K562 (cell line): ENCODE measurements at regions of chr2 and their contacts with region 1.

Region 1: DNA sequence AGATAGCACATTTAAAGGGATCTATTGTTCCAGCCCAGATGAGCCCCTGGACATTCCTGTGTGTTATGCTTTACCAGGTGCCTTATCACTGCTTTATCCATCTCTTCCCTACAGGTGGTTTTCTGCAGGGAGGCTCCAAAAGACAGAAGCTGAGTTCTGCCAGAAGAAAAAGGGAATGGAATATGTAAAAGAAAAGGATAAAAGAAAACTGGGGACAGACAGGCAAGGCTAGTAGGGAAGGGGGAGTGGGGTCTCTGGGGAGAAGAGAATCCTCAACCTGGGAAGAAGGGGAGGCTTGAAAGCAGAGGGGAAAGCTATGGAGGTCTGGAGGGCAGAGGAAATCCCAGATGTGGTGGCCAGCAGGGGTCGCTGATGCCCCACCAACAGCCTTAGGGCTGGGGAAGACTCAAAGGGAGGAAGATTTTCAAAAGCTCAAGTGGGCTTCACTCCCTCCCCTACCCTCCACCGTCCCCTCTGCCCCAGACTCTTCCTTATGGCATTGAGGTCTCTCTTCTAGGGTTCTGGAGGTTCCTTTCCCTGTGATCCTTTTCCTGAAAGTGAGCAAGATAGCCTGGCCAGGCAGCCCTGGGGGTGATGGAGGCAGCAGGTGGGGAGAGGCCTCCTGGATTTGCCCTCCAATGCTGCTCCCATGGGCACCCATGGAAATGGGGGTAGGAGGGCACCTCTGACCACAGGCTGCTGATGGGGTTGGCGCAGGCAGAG is 178.1 kb upstream of the PKDCC start:
- DNase-seq: peak; percentile 74 to 77 (median 76)
- ATAC-seq: peak; percentile 97
- H3K4me3 ChIP-seq: no peak overlapping the region
- H3K27ac ChIP-seq: no peak overlapping the region
- H3K4me1 ChIP-seq: no peaks in the 10 kb centered on the region
- H3K27me3 ChIP-seq: peaks cover 0 to 19% of the 10 kb centered on the region in 2 experiments; a peak in 2 of 5 replicates
- CTCF ChIP-seq: peak; percentile 80 to 90 (median 80)
- EP300 ChIP-seq: no peak
- POLR2A ChIP-seq: no peak
- RAD21 ChIP-seq: peak; percentile 96 to 97

Region 2: DNA sequence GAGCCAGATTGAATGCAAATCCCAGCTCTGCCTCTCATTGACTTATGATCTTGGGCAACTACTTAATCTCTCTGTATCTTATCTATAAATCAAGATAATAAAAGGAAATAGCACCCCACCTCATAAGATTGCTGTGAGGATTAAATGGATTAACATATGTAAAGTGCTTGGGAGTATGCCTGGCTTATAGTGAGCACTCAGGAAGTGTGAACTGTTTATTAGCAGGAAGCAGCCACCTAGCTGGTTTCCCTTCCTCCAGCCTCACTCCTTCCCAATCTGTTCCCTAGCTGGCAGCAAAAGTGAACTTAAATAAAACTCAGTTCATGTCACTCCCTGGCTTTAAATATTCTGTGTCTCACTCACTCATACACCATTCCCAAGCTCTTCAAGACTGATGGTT is 348.5 kb before region 1 on chr2:
- CTCF ChIA-PET with region 1: no interaction called
- POLR2A ChIA-PET with region 1: no interaction called
- in situ Hi-C with region 1: no loop called
- intact Hi-C with region 1: no loop called
- DNase-seq: no peak
- ATAC-seq: no peak
- H3K4me3 ChIP-seq: no peak overlapping the region
- H3K27ac ChIP-seq: no peak overlapping the region
- H3K4me1 ChIP-seq: no peaks in the 10 kb centered on the region
- H3K27me3 ChIP-seq: no peaks in the 10 kb centered on the region
- CTCF ChIP-seq: no peak
- EP300 ChIP-seq: no peak
- POLR2A ChIP-seq: no peak
- RAD21 ChIP-seq: no peak

Region 3: DNA sequence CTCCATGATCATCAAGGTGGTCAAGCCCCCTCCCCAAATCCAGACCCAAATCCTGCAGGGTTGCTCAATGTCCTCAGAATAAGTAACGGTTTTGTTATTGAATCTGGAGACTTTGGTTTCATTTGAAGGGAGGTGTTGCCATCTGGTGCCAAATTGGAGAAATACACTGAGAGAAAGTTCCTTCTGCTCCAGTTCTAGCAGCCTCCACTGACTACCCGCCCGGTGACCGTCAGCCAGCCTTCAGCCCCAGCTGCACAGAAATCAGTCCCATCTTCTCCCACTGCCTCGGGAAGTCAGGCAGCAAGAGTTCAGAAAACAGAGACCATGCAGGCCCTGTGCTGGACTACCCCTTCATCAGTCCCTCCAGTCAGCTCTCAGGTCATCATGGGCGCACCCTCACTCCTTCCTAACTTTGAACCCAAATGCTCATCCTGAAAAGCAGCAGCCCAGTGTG is 216.8 kb after region 1 on chr2:
- CTCF ChIA-PET with region 1: interaction called, 33 read pairs
- POLR2A ChIA-PET with region 1: interaction called, 3 read pairs
- in situ Hi-C with region 1: loop called (anchors 5 kb)
- intact Hi-C with region 1: loop called (anchors 1 kb)
- DNase-seq: peak; percentile 44 to 59 (median 52)
- ATAC-seq: peak; percentile 70
- H3K4me3 ChIP-seq: no peak overlapping the region
- H3K27ac ChIP-seq: no peak overlapping the region
- H3K4me1 ChIP-seq: peaks cover 0 to 3% of the 10 kb centered on the region in 2 experiments; a peak in 1 of 5 replicates
- H3K27me3 ChIP-seq: peaks cover 2 to 9% of the 10 kb centered on the region in 2 experiments; a peak in 3 of 5 replicates
- CTCF ChIP-seq: peak; percentile 59 to 78 (median 71)
- EP300 ChIP-seq: no peak
- POLR2A ChIP-seq: no peak
- RAD21 ChIP-seq: peak; percentile 94 to 95

Region 4: GRCh38 chr2:42183775-42184174 is 314.1 kb after region 1 on chr2:
- CTCF ChIA-PET with region 1: no interaction called
- POLR2A ChIA-PET with region 1: no interaction called
- in situ Hi-C with region 1: no loop called
- intact Hi-C with region 1: no loop called
- DNase-seq: no peak
- ATAC-seq: no peak
- H3K4me3 ChIP-seq: no peak overlapping the region
- H3K27ac ChIP-seq: no peak overlapping the region
- H3K4me1 ChIP-seq: peaks cover 0 to 6% of the 10 kb centered on the region in 2 experiments; a peak in 1 of 5 replicates
- H3K27me3 ChIP-seq: no peaks in the 10 kb centered on the region
- CTCF ChIP-seq: no peak
- EP300 ChIP-seq: no peak
- POLR2A ChIP-seq: no peak
- RAD21 ChIP-seq: no peak

Region 5: GRCh38 chr2:42196403-42197267 is 326.9 kb after region 1 on chr2:
- CTCF ChIA-PET with region 1: no interaction called
- POLR2A ChIA-PET with region 1: interaction called, 3 read pairs
- in situ Hi-C with region 1: loop called (anchors 25 kb)
- intact Hi-C with region 1: loop called (anchors 10 kb)
- DNase-seq: peak; percentile 43 to 73 (median 60)
- ATAC-seq: peak; percentile 98
- H3K4me3 ChIP-seq: no peak overlapping the region
- H3K27ac ChIP-seq: peak overlapping the region; percentile 46; the same call in 1 of the 3 replicates
- H3K4me1 ChIP-seq: peaks cover 4 to 10% of the 10 kb centered on the region in 2 experiments; a peak in 3 of 5 replicates
- H3K27me3 ChIP-seq: no peaks in the 10 kb centered on the region
- CTCF ChIP-seq: peak; percentile 66 to 99 (median 98)
- EP300 ChIP-seq: peak; percentile 83; the same call in 1 of the 2 replicates
- POLR2A ChIP-seq: no peak
- RAD21 ChIP-seq: peak; percentile 92

Region 6: DNA sequence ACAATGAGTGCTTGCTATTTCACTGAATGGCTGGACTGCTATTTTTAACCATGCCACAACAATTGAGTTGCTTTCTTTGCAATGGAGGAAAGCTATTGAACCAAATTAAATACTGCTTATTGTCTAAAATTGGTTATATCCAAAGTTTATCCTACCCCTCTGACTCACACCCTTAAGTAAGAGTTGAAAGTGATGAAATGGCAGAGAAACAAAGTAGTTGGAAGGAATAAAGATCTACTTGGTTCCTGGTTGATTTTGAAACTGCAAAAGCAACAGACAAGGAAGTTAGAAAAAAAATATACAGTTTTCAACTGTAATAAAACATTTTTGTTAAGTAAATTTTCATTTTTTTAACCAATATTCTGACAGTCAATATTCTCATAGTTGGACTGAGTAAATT is 347.0 kb after region 1 on chr2:
- CTCF ChIA-PET with region 1: no interaction called
- POLR2A ChIA-PET with region 1: no interaction called
- in situ Hi-C with region 1: loop called (anchors 25 kb)
- intact Hi-C with region 1: no loop called
- DNase-seq: no peak
- ATAC-seq: no peak
- H3K4me3 ChIP-seq: no peak overlapping the region
- H3K27ac ChIP-seq: no peak overlapping the region
- H3K4me1 ChIP-seq: no peaks in the 10 kb centered on the region; a peak in 1 of 5 replicates
- H3K27me3 ChIP-seq: no peaks in the 10 kb centered on the region
- CTCF ChIP-seq: no peak
- EP300 ChIP-seq: no peak
- POLR2A ChIP-seq: no peak
- RAD21 ChIP-seq: no peak

Region 7: DNA sequence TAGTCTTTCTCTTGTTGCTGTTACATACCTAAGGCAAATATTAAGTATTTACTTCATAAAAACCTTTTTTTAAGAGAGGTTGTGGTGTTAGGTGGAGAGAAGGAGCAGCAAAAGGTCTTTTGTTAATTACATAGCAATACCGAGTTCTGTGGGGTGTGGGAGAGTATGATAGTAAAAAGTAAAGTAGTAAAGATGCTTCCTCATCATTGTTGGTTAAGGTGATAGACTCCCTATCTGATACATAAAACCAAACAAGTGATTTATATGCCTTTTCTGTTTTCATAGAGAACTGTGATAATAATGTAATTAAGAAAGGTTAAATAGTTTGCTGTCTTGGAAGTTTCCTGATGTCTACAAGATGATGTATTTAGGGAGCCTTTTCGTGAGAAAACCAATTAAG is 374.8 kb after region 1 on chr2:
- CTCF ChIA-PET with region 1: no interaction called
- POLR2A ChIA-PET with region 1: no interaction called
- in situ Hi-C with region 1: no loop called
- intact Hi-C with region 1: loop called (anchors 5 kb)
- DNase-seq: no peak
- ATAC-seq: peak; percentile 37; the same call in 1 of the 3 replicates
- H3K4me3 ChIP-seq: no peak overlapping the region
- H3K27ac ChIP-seq: no peak overlapping the region
- H3K4me1 ChIP-seq: peaks cover 0 to 4% of the 10 kb centered on the region in 2 experiments; a peak in 2 of 5 replicates
- H3K27me3 ChIP-seq: no peaks in the 10 kb centered on the region
- CTCF ChIP-seq: no peak
- EP300 ChIP-seq: no peak
- POLR2A ChIP-seq: no peak
- RAD21 ChIP-seq: no peak

Region 8: GRCh38 chr2:42328148-42328833 is 458.6 kb after region 1 on chr2:
- CTCF ChIA-PET with region 1: interaction called, 3 read pairs
- POLR2A ChIA-PET with region 1: no interaction called
- in situ Hi-C with region 1: no loop called
- intact Hi-C with region 1: loop called (anchors 5 kb)
- DNase-seq: peak in 2 of 4 experiments; percentile 17 to 22
- ATAC-seq: peak; percentile 64
- H3K4me3 ChIP-seq: no peak overlapping the region
- H3K27ac ChIP-seq: no peak overlapping the region
- H3K4me1 ChIP-seq: peaks cover 0 to 9% of the 10 kb centered on the region in 2 experiments; a peak in 2 of 5 replicates
- H3K27me3 ChIP-seq: no peaks in the 10 kb centered on the region
- CTCF ChIP-seq: peak; percentile 18 to 63 (median 36); a peak in 4 of 6 replicates
- EP300 ChIP-seq: no peak
- POLR2A ChIP-seq: no peak
- RAD21 ChIP-seq: peak in 1 of 2 experiments; percentile 53; a peak in 3 of 4 replicates